ENCODE measurements at regions of chr2 and their contacts with region 1.

Region 1: GRCh38 chr2:85611705-85612587 is at the start of gene C2orf68:
- DNase-seq: peak; percentile 49 to 90 (median 83)
- ATAC-seq: peak; percentile 55
- H3K4me3 ChIP-seq: peak within 1 kb of the TSS; percentile 53 to 55
- H3K4me3 Mint-ChIP-seq: peak within 1 kb of the TSS; percentile 97
- H3K27ac ChIP-seq: peak within 1 kb of the TSS; percentile 61 to 70
- H3K27ac Mint-ChIP-seq: peak within 1 kb of the TSS; percentile 95
- H3K4me1 ChIP-seq: peaks cover 26% of the 10 kb centered on the region
- H3K4me1 Mint-ChIP-seq: peaks cover 39% of the 10 kb centered on the region
- H3K27me3 ChIP-seq: no peaks in the 10 kb centered on the region
- H3K27me3 Mint-ChIP-seq: no peaks in the 10 kb centered on the region
- CTCF ChIP-seq: no peak
- total RNA-seq, gene C2orf68: 23.2 to 27.9 TPM

Region 2: GRCh38 chr2:85437488-85438284 is 174.3 kb before region 1 on chr2:
- CTCF ChIA-PET with region 1: no interaction called
- POLR2A ChIA-PET with region 1: no interaction called
- intact Hi-C with region 1: loop called in 1 of 2 experiments (anchors 2 kb)
- DNase-seq: peak; percentile 49 to 91 (median 75)
- ATAC-seq: peak; percentile 82
- H3K4me3 ChIP-seq: peak overlapping the region; percentile 46 to 60
- H3K4me3 Mint-ChIP-seq: peak overlapping the region; percentile 86
- H3K27ac ChIP-seq: peak overlapping the region; percentile 56 to 77
- H3K27ac Mint-ChIP-seq: peak overlapping the region; percentile 94
- H3K4me1 ChIP-seq: peaks cover 32% of the 10 kb centered on the region
- H3K4me1 Mint-ChIP-seq: peaks cover 23% of the 10 kb centered on the region
- H3K27me3 ChIP-seq: no peaks in the 10 kb centered on the region
- H3K27me3 Mint-ChIP-seq: no peaks in the 10 kb centered on the region
- CTCF ChIP-seq: no peak

Region 3: GRCh38 chr2:85694052-85695025 is 82.4 kb after region 1 on chr2 and contains the start of gene GNLY:
- CTCF ChIA-PET with region 1: no interaction called
- POLR2A ChIA-PET with region 1: no interaction called
- intact Hi-C with region 1: no loop called
- DNase-seq: peak in 5 of 9 experiments; percentile 19 to 73 (median 48)
- ATAC-seq: peak; percentile 61
- H3K4me3 ChIP-seq: peak within 1 kb of the TSS; percentile 8 to 71
- H3K4me3 Mint-ChIP-seq: peak within 1 kb of the TSS; percentile 65
- H3K27ac ChIP-seq: peak within 1 kb of the TSS; percentile 50 to 76
- H3K27ac Mint-ChIP-seq: peak within 1 kb of the TSS; percentile 82
- H3K4me1 ChIP-seq: no peaks in the 10 kb centered on the region
- H3K4me1 Mint-ChIP-seq: peaks cover 2% of the 10 kb centered on the region
- H3K27me3 ChIP-seq: no peaks in the 10 kb centered on the region
- H3K27me3 Mint-ChIP-seq: peaks cover under 1% of the 10 kb centered on the region
- CTCF ChIP-seq: no peak
- total RNA-seq, gene GNLY: 90.8 to 92.9 TPM

Region 4: DNA sequence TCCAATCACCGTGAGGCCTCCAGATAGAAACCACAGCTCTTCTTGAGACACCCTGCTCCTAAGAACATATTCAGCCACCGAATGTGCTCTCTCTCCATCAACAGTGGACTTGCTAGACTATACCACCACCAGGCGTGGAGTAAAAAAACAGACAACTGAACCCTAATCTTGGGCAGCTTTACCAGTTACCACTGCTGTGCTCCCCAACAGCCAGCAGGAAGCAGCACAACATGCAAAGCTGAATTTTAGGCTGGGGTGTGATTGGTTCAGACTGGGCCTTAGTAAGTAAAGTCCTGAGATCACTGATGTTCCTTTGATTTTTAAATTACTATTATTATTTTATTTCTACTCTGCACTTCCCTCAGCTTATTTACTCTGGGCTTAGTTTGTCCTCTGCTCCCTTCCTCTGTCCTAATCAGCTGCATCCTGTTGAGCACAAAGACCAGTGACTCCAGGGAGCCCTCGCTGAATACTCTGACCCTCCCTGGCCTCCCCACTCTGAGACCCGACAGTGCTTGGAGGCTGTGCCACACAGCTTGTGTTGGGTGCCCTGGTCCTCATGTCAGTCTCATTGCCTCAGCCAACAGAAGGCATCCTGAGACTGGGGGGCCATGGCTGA is 609.2 kb after region 1 on chr2:
- CTCF ChIA-PET with region 1: no interaction called
- POLR2A ChIA-PET with region 1: no interaction called
- intact Hi-C with region 1: no loop called
- DNase-seq: peak in 8 of 9 experiments; percentile 18 to 69 (median 38)
- ATAC-seq: peak; percentile 74
- H3K4me3 ChIP-seq: no peak overlapping the region
- H3K4me3 Mint-ChIP-seq: no peak overlapping the region
- H3K27ac ChIP-seq: no peak overlapping the region
- H3K27ac Mint-ChIP-seq: no peak overlapping the region
- H3K4me1 ChIP-seq: peaks cover 4% of the 10 kb centered on the region
- H3K4me1 Mint-ChIP-seq: peaks cover 9% of the 10 kb centered on the region
- H3K27me3 ChIP-seq: no peaks in the 10 kb centered on the region
- H3K27me3 Mint-ChIP-seq: no peaks in the 10 kb centered on the region
- CTCF ChIP-seq: peak; percentile 72

Measured in CD8-positive, alpha-beta T cell (primary cell).